Panc1 (cell line): ENCODE measurements at regions of chr4 and their contacts with region 1.

Region 1: GRCh38 chr4:184359888-184360287 is 114.5 kb downstream of the IRF2 start:
- DNase-seq: no peak
- ATAC-seq: no peak
- H3K4me3 ChIP-seq: no peak overlapping the region
- H3K27ac ChIP-seq: peak overlapping the region; percentile 7; the same call in 1 of the 2 replicates
- H3K4me1 ChIP-seq: peaks cover 2% of the 10 kb centered on the region
- H3K27me3 ChIP-seq: no peaks in the 10 kb centered on the region
- CTCF ChIP-seq: no peak

Region 2: DNA sequence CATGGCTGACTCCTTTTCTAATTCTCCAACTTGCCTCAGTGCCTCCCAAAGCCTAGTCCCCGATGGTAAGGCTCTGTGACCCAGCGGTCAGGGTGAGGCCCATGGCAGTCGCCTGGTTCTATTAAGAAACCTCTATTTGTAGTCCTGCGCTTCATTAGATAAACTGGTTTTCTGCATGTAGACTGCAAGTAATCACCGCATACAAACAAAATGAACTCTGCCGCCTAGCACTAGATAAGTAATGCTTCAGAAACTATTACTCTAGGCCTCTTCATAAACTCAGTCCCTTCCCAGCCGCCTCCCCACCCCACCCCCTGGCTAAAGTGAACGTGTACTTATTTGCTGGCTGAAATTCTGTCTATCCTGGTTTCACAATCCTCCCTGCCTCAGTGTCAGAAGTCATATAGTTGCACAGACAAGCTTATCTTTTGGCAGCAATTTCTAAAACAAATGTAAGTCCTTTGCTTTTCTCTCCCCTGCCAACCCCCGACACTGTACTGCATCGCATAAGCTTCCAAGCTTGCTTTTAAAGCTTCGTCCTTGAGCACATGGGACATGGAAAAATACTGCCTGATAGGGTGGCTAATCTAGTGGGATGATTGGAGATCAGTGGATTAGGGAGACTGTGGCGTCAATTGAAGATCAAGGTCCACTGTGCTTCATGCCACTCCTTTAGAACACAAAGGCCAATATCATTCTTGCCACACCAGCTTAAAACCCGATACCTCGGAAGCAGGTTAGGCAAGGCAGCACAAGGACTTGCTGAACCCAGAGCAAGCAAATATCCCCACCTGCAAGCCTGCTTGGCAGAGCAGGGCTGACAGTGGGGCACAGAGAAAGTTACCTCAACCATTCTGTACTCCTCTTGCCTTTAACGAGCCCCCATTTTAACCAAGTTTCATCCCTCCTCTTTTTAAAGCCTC is 11.3 kb before region 1 on chr4:
- CTCF ChIA-PET with region 1: no interaction called
- POLR2A ChIA-PET with region 1: interaction called, 15 read pairs
- in situ Hi-C with region 1: no loop called
- intact Hi-C with region 1: no loop called
- DNase-seq: no peak
- ATAC-seq: no peak
- H3K4me3 ChIP-seq: no peak overlapping the region
- H3K27ac ChIP-seq: no peak overlapping the region
- H3K4me1 ChIP-seq: no peaks in the 10 kb centered on the region
- H3K27me3 ChIP-seq: no peaks in the 10 kb centered on the region
- CTCF ChIP-seq: no peak

Region 3: GRCh38 chr4:184395971-184396391 is 36.1 kb after region 1 on chr4:
- CTCF ChIA-PET with region 1: no interaction called
- POLR2A ChIA-PET with region 1: no interaction called
- in situ Hi-C with region 1: no loop called
- intact Hi-C with region 1: no loop called
- DNase-seq: no peak
- ATAC-seq: no peak
- H3K4me3 ChIP-seq: no peak overlapping the region
- H3K27ac ChIP-seq: no peak overlapping the region
- H3K4me1 ChIP-seq: no peaks in the 10 kb centered on the region
- H3K27me3 ChIP-seq: no peaks in the 10 kb centered on the region
- CTCF ChIP-seq: no peak